Heart right ventricle (tissue), 16 donors: ENCODE measurements at regions of chr18 and their contacts with region 1.

Region 1: DNA sequence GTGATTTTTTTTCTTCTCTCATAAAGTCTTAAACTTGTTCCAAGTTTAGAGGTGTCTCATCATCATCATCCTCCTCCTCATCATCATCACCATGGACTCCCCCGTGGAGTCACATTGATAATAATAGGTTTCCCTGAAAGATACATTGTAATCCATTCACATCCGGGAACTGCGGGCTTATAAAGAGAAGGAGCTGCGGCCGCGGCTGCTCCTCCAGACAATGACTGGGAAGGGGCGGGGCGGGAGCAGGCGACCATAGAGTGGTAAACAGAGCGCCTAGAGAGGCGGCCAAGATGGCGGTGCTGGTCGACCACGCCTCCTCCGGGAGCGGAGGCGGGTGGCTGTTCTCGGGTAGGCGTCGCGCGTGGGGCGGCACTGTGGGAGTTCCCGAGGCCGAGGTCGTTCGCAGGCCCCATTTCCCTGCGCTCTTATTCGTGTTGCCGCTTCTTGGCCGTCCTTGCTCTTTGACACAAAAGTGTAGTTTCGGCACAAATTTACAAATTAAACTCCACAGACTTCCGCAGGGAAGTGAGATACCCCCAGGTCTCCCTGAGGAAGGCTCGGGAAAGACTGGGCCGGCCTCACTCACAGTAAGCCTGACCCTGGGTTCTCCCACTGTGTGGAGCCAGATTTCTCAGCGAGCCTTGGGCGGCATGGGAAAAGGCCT is 1.8 kb upstream of the TCF4 start:
- DNase-seq: peak; percentile 97 to 98
- ATAC-seq: peak; percentile 95 to 99 (median 97)
- H3K4me3 ChIP-seq: peak overlapping the region; percentile 49 to 78 (median 73)
- H3K27ac ChIP-seq: peak overlapping the region; percentile 69 to 95 (median 87)
- H3K4me1 ChIP-seq: peaks cover 0 to 29% (median 12%) of the 10 kb centered on the region in 9 donors
- H3K27me3 ChIP-seq: no peaks in the 10 kb centered on the region
- CTCF ChIP-seq: peak in 2 of 9 donors; percentile 15 to 43

Region 2: GRCh38 chr18:55243857-55244256 is 345.9 kb before region 1 on chr18:
- intact Hi-C with region 1: loop called in 3 of 10 experiments (anchors 5 to 10 kb)
- DNase-seq: peak in 1 of 2 donors; percentile 89
- ATAC-seq: peak; percentile 75 to 91 (median 84)
- H3K4me3 ChIP-seq: peak overlapping the region in 1 of 10 donors; percentile 9
- H3K27ac ChIP-seq: peak overlapping the region; percentile 55 to 89 (median 76)
- H3K4me1 ChIP-seq: peaks cover 21 to 100% (median 80%) of the 10 kb centered on the region in 9 donors
- H3K27me3 ChIP-seq: no peaks in the 10 kb centered on the region
- CTCF ChIP-seq: no peak

Region 3: DNA sequence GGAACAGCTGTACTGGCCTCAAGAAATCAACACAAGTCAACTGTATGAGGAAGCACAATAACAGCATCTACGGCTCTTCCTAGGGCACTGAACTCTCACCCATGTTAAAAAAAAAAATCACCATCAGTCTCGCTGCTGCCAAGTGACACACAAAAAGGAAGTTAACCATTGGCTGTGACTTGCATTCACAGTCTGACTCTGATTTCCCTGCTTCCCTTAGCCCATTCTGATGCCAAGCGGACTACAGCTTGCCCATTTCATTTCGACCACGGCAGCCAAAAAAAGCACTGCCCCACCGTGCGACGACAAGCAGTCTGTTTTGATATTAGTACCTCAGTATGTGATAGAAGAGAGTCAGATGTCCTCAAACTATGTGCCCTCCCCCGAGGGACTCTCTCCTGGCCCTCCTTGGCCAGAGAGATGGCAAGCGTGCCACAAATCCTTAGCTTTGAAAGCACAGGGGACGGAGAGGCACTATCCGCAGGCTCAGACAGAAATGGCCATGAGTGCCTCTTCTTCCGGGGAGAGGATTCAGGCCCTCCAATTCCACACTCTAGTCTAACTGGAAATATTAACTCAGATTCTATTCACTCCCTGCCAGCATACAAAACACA is 251.7 kb before region 1 on chr18:
- intact Hi-C with region 1: loop called in 4 of 10 experiments (anchors 5 to 10 kb)
- DNase-seq: peak; percentile 34 to 53
- ATAC-seq: peak; percentile 70 to 88 (median 80)
- H3K4me3 ChIP-seq: peak overlapping the region in 7 of 10 donors; percentile 9 to 39 (median 14)
- H3K27ac ChIP-seq: peak overlapping the region; percentile 18 to 91 (median 80)
- H3K4me1 ChIP-seq: peaks cover 2 to 76% (median 56%) of the 10 kb centered on the region in 9 donors
- H3K27me3 ChIP-seq: no peaks in the 10 kb centered on the region
- CTCF ChIP-seq: no peak

Region 4: DNA sequence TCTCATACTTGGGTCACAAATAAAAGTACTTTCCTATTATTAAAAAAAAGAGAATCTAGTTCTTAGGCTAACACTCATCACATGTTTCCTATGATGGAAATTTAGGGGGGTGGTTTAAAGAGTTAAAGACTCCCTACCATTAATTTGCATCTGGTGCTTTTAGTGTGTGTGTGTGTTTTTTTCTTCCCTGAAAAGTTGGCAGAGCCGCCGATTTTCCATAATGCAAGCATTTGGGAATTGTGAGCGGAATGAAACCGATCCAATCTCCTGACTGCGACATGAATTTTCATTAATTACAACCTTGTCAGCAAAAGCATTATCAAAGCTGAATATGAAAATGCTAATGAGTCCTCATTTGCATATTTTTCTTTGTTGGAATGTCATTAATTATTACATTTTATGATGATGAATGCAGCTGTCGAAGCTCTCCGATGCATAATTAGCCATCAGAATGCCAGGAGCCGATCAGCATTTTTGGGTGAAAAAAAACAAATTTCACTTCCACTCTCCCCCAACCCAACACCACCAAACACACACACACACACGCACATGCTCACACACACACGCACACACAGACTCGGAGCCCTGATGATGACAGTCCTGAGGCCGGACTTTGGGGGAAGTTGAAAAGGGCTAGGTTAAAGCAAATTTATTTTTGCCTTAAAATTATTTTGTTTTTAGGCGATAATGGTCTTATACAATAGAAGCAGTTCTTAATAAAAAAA is 167.1 kb before region 1 on chr18:
- intact Hi-C with region 1: loop called in 8 of 10 experiments (anchors 1 to 5 kb)
- DNase-seq: peak; percentile 27 to 82
- ATAC-seq: peak in 6 of 8 donors; percentile 56 to 75 (median 68)
- H3K4me3 ChIP-seq: peak overlapping the region in 9 of 10 donors; percentile 15 to 53 (median 46)
- H3K27ac ChIP-seq: peak overlapping the region; percentile 73 to 92 (median 80)
- H3K4me1 ChIP-seq: peaks cover 0 to 46% (median 25%) of the 10 kb centered on the region in 9 donors
- H3K27me3 ChIP-seq: no peaks in the 10 kb centered on the region
- CTCF ChIP-seq: no peak

Region 5: DNA sequence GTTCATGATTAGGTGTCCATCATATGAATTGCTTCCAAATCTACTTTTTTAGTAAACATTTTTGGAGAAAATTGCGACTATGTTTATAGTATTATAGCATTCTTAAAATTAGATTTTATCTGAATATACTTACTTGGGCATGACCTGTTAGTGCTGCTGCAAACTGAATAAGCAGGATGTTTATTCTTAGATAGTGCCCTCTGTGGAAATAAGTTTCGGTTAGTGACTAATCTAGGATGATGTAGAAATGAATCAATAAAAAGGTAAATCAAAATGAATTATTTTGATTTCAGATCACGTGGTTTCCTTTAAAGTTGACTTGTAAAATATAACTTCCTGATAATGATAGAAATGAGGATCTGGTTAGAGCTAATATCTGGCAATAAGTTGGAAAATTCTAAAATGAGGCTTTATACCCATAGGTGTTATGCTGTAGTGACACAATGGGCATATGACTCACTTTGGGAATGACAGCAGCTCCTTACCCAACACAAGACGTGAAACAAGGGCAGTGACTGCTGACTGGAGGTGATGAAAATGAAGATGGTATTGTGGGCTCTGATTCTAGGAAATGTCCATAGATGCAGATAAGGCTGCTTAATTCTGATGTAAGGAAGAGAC is 164.0 kb after region 1 on chr18:
- intact Hi-C with region 1: no loop called
- DNase-seq: no peak
- ATAC-seq: no peak
- H3K4me3 ChIP-seq: no peak overlapping the region
- H3K27ac ChIP-seq: no peak overlapping the region
- H3K4me1 ChIP-seq: no peaks in the 10 kb centered on the region
- H3K27me3 ChIP-seq: no peaks in the 10 kb centered on the region
- CTCF ChIP-seq: no peak

Region 6: DNA sequence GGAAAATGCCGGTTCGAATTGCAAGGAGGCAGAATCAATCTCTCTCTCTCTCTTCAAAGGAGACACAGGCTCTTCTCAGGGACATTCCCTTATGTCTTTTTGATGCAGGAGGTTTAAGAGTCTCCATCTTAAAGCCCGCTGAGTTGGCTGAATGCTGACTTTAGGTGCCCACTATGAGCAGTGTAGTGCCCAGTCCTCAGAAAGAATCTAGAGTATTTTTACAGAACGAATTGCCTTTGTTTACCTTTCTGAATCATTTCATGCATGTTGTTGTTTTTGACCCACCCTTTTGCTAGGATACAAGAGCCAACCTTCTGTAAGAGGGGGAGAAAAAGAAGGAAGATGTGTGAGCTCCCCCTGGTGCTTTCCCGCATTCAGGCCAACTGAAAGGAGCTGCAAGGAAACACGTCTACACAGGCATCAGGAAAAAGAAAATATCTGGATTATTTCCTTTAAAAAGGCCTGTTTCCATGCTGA is 191.8 kb after region 1 on chr18:
- intact Hi-C with region 1: loop called in 7 of 10 experiments (anchors 1 to 10 kb)
- DNase-seq: peak; percentile 24 to 63
- ATAC-seq: peak in 7 of 8 donors; percentile 54 to 79 (median 65)
- H3K4me3 ChIP-seq: no peak overlapping the region
- H3K27ac ChIP-seq: peak overlapping the region in 9 of 10 donors; percentile 85 to 97 (median 93)
- H3K4me1 ChIP-seq: peaks cover 0 to 42% (median 28%) of the 10 kb centered on the region in 9 donors
- H3K27me3 ChIP-seq: peaks cover 0 to 8% (median 0%) of the 10 kb centered on the region in 7 donors
- CTCF ChIP-seq: peak; percentile 37 to 78 (median 66)